Caco-2 (cell line): ENCODE measurements at regions of chr4 and their contacts with region 1.

Region 1: DNA sequence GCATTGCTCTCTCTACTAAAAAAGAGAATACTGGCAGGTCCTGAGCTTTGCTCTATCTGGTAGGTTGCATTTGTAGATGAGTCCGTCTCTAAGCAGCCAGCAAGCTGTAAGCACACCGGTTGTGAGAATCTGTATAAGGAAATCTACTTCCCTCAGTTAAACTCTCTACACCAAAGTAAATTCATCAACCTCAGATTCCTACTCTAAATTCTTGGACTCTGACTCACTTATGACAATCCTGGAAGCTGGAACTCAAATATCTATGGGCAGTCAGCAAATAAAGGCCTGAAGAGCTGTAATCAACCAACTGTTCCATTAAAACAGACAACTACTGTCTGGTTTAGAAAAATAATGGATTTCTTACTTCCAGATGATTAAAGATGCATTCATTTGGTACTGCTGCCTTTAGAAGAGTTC is 37.9 kb downstream of the FAT1 start:
- DNase-seq: peak in 1 of 2 experiments; percentile 49
- H3K4me3 ChIP-seq: no peak overlapping the region
- H3K4me3 Mint-ChIP-seq: peak overlapping the region; percentile 57
- H3K27ac Mint-ChIP-seq: peak overlapping the region; percentile 87
- H3K4me1 ChIP-seq: peaks cover 83% of the 10 kb centered on the region
- H3K4me1 Mint-ChIP-seq: peaks cover 53% of the 10 kb centered on the region
- H3K27me3 ChIP-seq: no peaks in the 10 kb centered on the region
- H3K27me3 Mint-ChIP-seq: no peaks in the 10 kb centered on the region
- CTCF ChIP-seq: no peak

Region 2: DNA sequence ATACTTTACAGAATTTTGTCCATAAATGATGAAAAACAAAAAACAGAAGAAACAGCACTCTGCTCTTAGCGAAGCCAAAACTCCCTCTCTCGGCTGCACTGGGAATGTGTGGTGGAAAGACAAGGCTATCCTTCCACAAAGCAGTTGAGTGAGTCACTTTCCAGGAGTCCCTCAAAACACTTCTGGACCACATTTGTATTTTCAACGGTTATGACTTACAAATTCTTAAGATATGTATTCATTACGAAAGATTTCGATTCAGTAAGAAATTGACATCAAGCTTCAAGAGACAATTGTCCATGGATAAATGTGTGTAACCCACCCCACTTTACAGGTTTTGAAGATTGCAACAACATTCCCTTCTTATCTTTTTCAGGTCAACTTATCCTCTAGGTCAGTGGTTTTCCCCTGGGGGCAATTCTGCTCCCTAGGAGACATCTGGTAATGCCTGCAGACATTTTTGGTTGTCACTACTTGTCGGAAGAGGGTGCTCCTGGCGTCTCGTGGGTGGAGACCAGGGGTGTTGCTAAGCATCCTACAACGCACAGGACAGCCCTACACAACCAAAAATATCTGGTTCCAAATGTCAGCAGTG is 63.7 kb before region 1 on chr4:
- CTCF ChIA-PET with region 1: no interaction called
- POLR2A ChIA-PET with region 1: no interaction called
- intact Hi-C with region 1: loop called (anchors 1 kb)
- DNase-seq: peak; percentile 79 to 86
- H3K4me3 ChIP-seq: no peak overlapping the region
- H3K4me3 Mint-ChIP-seq: no peak overlapping the region
- H3K27ac Mint-ChIP-seq: peak overlapping the region; percentile 80
- H3K4me1 ChIP-seq: peaks cover 49% of the 10 kb centered on the region
- H3K4me1 Mint-ChIP-seq: peaks cover 29% of the 10 kb centered on the region
- H3K27me3 ChIP-seq: no peaks in the 10 kb centered on the region
- H3K27me3 Mint-ChIP-seq: no peaks in the 10 kb centered on the region
- CTCF ChIP-seq: no peak

Region 3: DNA sequence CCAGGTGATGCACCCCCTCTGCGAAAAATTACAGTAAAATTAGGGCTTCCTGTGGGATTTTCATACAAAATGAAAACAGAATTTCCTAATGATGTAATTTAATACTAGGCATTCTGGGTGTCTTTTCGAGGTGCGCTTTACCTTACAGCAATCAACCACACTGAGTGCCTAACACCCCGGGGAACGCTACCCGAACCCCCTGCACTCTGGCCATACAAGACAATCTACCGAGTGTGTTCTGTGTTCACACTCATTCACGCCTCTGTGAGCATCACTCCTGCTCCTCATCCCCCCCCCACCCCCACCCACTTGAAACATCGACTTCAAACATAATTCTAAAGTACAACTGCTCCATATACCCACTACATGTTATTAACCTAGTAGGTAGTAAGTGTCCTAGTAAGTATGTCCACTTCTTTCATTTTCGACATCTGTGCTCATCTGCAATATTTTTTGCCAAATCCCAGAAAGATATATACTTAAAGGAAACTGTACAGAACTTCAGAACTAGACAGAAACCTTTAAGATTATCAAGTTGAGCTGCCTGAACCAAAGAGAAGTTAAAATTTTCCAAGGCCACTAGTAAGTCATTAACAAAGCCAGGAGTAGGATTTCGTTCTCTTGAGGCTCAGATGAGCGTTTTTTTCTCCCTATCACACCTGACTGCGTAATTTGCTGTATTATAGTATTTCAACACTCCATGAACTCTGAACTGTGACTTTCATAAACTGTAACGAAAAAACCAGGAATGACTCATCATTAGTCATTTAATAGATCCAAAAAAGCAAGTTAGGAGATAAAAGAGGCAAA is 42.1 kb before region 1 on chr4:
- CTCF ChIA-PET with region 1: no interaction called
- POLR2A ChIA-PET with region 1: no interaction called
- intact Hi-C with region 1: loop called (anchors 1 kb)
- DNase-seq: peak in 1 of 2 experiments; percentile 41
- H3K4me3 ChIP-seq: peak overlapping the region; percentile 0; the same call in 1 of the 2 replicates
- H3K4me3 Mint-ChIP-seq: peak overlapping the region; percentile 61
- H3K27ac Mint-ChIP-seq: peak overlapping the region; percentile 84
- H3K4me1 ChIP-seq: peaks cover 22% of the 10 kb centered on the region
- H3K4me1 Mint-ChIP-seq: peaks cover 43% of the 10 kb centered on the region
- H3K27me3 ChIP-seq: no peaks in the 10 kb centered on the region
- H3K27me3 Mint-ChIP-seq: no peaks in the 10 kb centered on the region
- CTCF ChIP-seq: no peak

Region 4: GRCh38 chr4:186653971-186654370 is 31.8 kb before region 1 on chr4:
- CTCF ChIA-PET with region 1: no interaction called
- POLR2A ChIA-PET with region 1: no interaction called
- intact Hi-C with region 1: no loop called
- DNase-seq: no peak
- H3K4me3 ChIP-seq: no peak overlapping the region
- H3K4me3 Mint-ChIP-seq: no peak overlapping the region
- H3K27ac Mint-ChIP-seq: peak overlapping the region; percentile 5
- H3K4me1 ChIP-seq: peaks cover 27% of the 10 kb centered on the region
- H3K4me1 Mint-ChIP-seq: peaks cover 28% of the 10 kb centered on the region
- H3K27me3 ChIP-seq: no peaks in the 10 kb centered on the region
- H3K27me3 Mint-ChIP-seq: no peaks in the 10 kb centered on the region
- CTCF ChIP-seq: no peak

Region 5: DNA sequence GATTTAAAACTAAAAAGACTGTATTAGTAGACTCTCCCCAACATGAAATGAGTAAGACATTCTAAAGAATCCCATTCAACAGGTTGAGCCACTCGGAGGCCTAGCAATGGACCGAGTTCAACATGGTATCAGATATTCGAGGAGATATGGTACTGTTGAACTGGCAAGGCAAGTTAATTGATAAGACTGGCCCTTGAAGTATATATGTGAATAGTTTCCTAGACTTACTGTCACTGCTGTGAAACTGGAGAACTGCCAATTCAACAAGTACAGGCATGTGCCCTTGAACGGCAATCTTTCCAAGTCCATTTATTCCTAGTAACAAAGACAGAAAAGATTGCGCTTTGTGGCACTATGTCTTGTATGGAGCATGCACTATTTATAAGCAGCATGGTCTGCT is 13.5 kb after region 1 on chr4:
- CTCF ChIA-PET with region 1: no interaction called
- POLR2A ChIA-PET with region 1: no interaction called
- intact Hi-C with region 1: loop called (anchors 1 kb)
- DNase-seq: peak in 1 of 2 experiments; percentile 34
- H3K4me3 ChIP-seq: no peak overlapping the region
- H3K4me3 Mint-ChIP-seq: peak overlapping the region; percentile 19
- H3K27ac Mint-ChIP-seq: no peak overlapping the region
- H3K4me1 ChIP-seq: peaks cover 47% of the 10 kb centered on the region
- H3K4me1 Mint-ChIP-seq: peaks cover 48% of the 10 kb centered on the region
- H3K27me3 ChIP-seq: no peaks in the 10 kb centered on the region
- H3K27me3 Mint-ChIP-seq: no peaks in the 10 kb centered on the region
- CTCF ChIP-seq: no peak